Common myeloid progenitor, CD34-positive (primary cell): ENCODE measurements at regions of chr22 and their contacts with region 1.

Region 1: DNA sequence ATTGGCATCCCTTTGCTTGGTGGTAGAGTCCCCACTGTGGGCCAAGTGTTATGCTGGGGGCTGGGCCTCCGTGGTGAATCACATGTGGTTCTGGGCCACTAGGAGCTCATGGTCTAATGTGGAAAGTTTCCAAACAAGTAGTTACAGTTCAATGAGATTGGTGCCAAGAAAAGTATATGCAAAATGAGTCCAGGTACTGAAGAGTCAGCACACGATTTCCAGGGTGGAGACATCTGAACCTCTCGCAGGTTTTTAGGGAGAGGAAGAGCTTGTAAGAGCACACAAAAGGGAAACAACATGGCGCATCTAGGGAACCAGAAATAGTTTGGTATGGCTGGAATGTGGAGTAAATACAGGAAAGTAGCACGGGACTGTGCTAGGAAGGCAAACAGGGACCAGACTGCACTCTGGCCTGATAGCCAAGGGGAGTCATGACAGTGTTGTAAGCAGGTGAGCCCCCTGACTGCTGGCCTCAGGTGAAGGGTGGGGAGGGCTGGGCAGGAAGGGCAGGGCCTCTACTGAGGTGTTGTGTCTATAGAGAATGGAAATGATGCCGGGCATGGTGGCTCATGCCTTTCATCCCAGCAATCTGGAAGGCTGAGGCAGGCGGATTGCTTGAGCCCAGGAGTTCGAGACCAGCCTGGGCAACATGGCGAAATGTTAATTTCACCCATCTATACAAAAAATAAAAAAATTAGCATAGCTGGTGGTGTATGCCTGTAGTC is 12.6 kb downstream of the POLR2F start:
- DNase-seq: no peak
- H3K4me3 ChIP-seq: no peak overlapping the region
- H3K27ac ChIP-seq: no peak overlapping the region
- H3K4me1 ChIP-seq: no peaks in the 10 kb centered on the region
- H3K27me3 ChIP-seq: no peaks in the 10 kb centered on the region

Region 2: GRCh38 chr22:37953437-37954179 is 12.5 kb before region 1 on chr22 and contains the starts of genes C22orf23 and POLR2F:
- CTCF ChIA-PET with region 1: interaction called, 20 read pairs
- POLR2A ChIA-PET with region 1: no interaction called
- DNase-seq: peak; percentile 94 to 97 (median 95)
- H3K4me3 ChIP-seq: peak within 1 kb of the TSS; percentile 78 to 99 (median 90)
- H3K27ac ChIP-seq: peak within 1 kb of the TSS; percentile 58 to 85
- H3K4me1 ChIP-seq: peaks cover 0 to 23% (median 20%) of the 10 kb centered on the region in 4 experiments
- H3K27me3 ChIP-seq: peaks cover 0 to 19% (median 3%) of the 10 kb centered on the region in 5 experiments

Region 3: DNA sequence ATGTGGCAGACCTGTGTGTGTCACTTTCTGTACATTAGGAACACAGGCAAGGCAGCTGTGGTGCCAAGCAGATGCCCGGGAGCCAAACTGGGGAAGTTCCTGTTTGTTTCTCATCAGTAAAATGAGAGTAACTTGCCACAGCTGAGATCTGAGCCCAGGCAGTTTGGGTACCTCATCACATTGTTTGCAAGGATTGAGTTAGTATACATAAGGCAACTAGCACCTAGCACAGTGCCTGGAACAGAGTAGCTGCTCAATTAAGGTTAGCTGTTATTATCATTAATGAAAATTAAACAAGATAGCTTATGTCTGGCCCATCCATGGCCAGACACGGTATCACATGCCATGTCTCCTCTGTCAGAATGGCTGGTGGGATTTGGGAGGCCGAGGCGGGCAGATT is 10.4 kb after region 1 on chr22:
- CTCF ChIA-PET with region 1: interaction called, 14 read pairs
- POLR2A ChIA-PET with region 1: no interaction called
- DNase-seq: no peak
- H3K4me3 ChIP-seq: no peak overlapping the region
- H3K27ac ChIP-seq: no peak overlapping the region
- H3K4me1 ChIP-seq: no peaks in the 10 kb centered on the region
- H3K27me3 ChIP-seq: no peaks in the 10 kb centered on the region